Activated CD8-positive, alpha-beta T cell treated with anti-CD3 and anti-CD28 coated beads for 36 hours (primary cell): ENCODE measurements at regions of chr21 and their contacts with region 1.

Region 1: DNA sequence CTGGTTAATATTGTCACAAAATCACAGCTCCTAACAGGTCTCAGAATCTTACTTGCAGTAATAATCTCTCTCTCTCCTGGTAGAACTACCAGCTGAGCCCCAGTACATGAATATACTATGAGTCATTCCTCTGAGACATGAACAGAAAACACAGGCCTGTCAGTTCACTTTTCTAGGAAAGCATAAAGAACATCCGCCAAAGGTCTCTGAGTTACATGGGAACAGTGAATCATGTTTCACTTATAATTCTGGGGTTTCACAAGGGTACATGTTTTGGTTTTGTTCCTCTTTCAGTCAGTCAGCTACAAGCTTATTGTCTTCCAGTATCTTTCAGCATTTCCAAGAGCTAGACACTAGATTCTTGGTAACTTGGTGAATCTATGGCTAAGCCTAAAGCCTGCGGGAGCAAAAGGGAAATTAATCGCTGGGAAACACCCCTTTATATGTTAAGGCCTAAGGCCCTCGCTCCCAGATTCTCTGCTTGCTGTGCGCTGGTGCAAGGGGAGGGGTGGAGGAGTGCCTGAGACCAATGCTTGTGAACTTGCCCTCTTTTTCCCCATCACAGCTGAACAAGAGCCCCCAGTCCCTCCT is 31.7 kb downstream of the IFNGR2 start:
- DNase-seq: peak; percentile 51
- ATAC-seq: peak; percentile 94
- H3K4me3 Mint-ChIP-seq: peak overlapping the region; percentile 1
- H3K27ac Mint-ChIP-seq: peak overlapping the region; percentile 77
- H3K4me1 Mint-ChIP-seq: peaks cover 26% of the 10 kb centered on the region
- H3K27me3 Mint-ChIP-seq: no peaks in the 10 kb centered on the region
- CTCF ChIP-seq: no peak

Region 2: GRCh38 chr21:33386222-33386784 is 48.6 kb before region 1 on chr21:
- CTCF ChIA-PET with region 1: interaction called, 6 read pairs
- POLR2A ChIA-PET with region 1: interaction called, 10 read pairs
- intact Hi-C with region 1: loop called (anchors 2 kb)
- DNase-seq: no peak
- ATAC-seq: no peak
- H3K4me3 Mint-ChIP-seq: no peak overlapping the region
- H3K27ac Mint-ChIP-seq: no peak overlapping the region
- H3K4me1 Mint-ChIP-seq: peaks cover 40% of the 10 kb centered on the region
- H3K27me3 Mint-ChIP-seq: peaks cover 21% of the 10 kb centered on the region
- CTCF ChIP-seq: peak; percentile 23

Region 3: GRCh38 chr21:33403779-33404585 is 30.9 kb before region 1 on chr21:
- CTCF ChIA-PET with region 1: interaction called, 3 read pairs
- POLR2A ChIA-PET with region 1: interaction called, 4 read pairs
- intact Hi-C with region 1: loop called (anchors 5 kb)
- DNase-seq: peak; percentile 32
- ATAC-seq: peak; percentile 33
- H3K4me3 Mint-ChIP-seq: peak overlapping the region; percentile 78
- H3K27ac Mint-ChIP-seq: peak overlapping the region; percentile 82
- H3K4me1 Mint-ChIP-seq: peaks cover 34% of the 10 kb centered on the region
- H3K27me3 Mint-ChIP-seq: peaks cover 11% of the 10 kb centered on the region
- CTCF ChIP-seq: no peak

Region 4: GRCh38 chr21:33451634-33452071 is 16.8 kb after region 1 on chr21:
- CTCF ChIA-PET with region 1: no interaction called
- POLR2A ChIA-PET with region 1: no interaction called
- intact Hi-C with region 1: no loop called
- DNase-seq: no peak
- ATAC-seq: no peak
- H3K4me3 Mint-ChIP-seq: no peak overlapping the region
- H3K27ac Mint-ChIP-seq: no peak overlapping the region
- H3K4me1 Mint-ChIP-seq: no peaks in the 10 kb centered on the region
- H3K27me3 Mint-ChIP-seq: no peaks in the 10 kb centered on the region
- CTCF ChIP-seq: no peak